GM10248 (cell line): ENCODE measurements at regions of chr14 and their contacts with region 1.

Region 1: GRCh38 chr14:60091550-60092530 is at the start of gene PCNX4:
- DNase-seq: peak; percentile 92
- CTCF ChIP-seq: no peak

Region 2: GRCh38 chr14:60106339-60106738 is 14.5 kb after region 1 on chr14:
- CTCF ChIA-PET with region 1: interaction called, 10 read pairs
- POLR2A ChIA-PET with region 1: no interaction called
- DNase-seq: no peak
- CTCF ChIP-seq: no peak

Region 3: GRCh38 chr14:60195179-60195810 is 103.5 kb after region 1 on chr14:
- CTCF ChIA-PET with region 1: no interaction called
- POLR2A ChIA-PET with region 1: no interaction called
- DNase-seq: no peak
- CTCF ChIP-seq: peak; percentile 56